Activated T-helper 1 cell treated with anti-CD3 and anti-CD28 coated beads, Interleukin-12 subunit alpha, Interleukin-12 subunit beta, Interleukin-2, Interleukin-4 antibody, amounts not matched to agents 30 ng/mL and 10 ng/mL and 1 ng/mL, durations not matched to agents 14 hours and 24 hours and 36 hours (primary cell): ENCODE measurements at regions of chr18 and their contacts with region 1.

Region 1: GRCh38 chr18:63518178-63519012 is 23.8 kb upstream of the SERPINB12 start:
- DNase-seq: peak; percentile 46
- H3K4me3 Mint-ChIP-seq: no peak overlapping the region
- H3K27ac Mint-ChIP-seq: no peak overlapping the region
- H3K4me1 Mint-ChIP-seq: no peaks in the 10 kb centered on the region
- H3K27me3 Mint-ChIP-seq: peaks cover 14% of the 10 kb centered on the region

Region 2: GRCh38 chr18:63578357-63578958 is 60.1 kb after region 1 on chr18:
- intact Hi-C with region 1: loop called (anchors 1 kb)
- DNase-seq: no peak
- H3K4me3 Mint-ChIP-seq: no peak overlapping the region
- H3K27ac Mint-ChIP-seq: no peak overlapping the region
- H3K4me1 Mint-ChIP-seq: no peaks in the 10 kb centered on the region
- H3K27me3 Mint-ChIP-seq: peaks cover 18% of the 10 kb centered on the region

Region 3: DNA sequence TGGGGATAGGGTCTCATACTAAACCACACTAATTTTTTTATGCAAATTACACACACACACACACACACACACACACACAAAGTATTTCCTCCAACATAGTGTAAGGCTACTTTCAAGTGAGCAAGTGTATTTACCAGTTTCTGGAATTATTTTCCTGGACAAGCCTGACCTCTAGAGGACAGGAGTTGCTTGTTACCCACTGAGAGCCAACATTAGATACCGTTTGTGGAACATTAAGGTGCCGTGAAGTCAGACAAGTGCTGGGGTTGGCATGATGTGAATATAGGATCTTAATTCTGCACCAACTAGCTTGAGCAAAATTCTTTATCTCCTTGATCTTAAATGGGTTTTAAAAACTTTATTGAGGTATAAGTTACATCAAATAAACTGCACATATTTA is 329.8 kb after region 1 on chr18:
- intact Hi-C with region 1: loop called (anchors 1 kb)
- DNase-seq: no peak
- H3K4me3 Mint-ChIP-seq: no peak overlapping the region
- H3K27ac Mint-ChIP-seq: no peak overlapping the region
- H3K4me1 Mint-ChIP-seq: no peaks in the 10 kb centered on the region
- H3K27me3 Mint-ChIP-seq: peaks cover 12% of the 10 kb centered on the region

Region 4: DNA sequence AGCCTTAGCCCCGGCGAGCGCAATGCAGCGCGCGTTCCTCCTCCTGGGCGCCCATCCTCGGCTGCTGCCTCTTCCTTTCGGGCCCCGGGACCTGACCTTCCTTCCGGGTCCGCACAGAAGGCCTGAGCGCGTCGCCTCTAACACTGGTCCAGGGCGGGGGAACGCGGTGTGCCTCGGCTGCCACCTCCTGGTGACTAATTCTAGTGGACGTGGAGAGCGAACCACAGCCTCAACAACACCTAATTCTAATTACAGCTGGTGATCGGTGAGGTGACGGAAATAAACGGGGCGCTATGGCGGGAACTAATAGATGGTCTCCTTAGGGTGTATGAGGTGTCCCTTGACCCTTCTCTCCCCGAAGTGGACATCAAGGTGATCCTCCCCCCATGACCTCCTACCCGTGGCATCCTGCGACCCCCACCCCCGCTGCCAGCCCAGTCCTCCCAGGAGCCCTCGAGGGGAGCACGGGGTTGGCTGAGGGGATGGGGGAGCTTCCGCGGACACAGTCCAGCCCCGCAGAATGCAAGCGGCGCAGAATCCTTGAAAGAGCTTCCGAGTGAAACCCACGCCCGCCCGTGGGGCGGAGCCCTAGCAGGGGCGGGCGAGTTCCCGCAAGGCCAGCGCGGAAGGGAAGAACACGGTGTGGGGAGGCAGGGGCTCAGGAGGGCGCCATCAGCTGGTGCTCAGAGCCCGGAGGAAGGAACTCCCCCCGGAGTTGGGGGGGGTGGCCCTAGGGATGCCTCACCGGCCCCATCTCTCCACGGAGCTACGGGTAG is 417.9 kb after region 1 on chr18:
- intact Hi-C with region 1: loop called (anchors 1 kb)
- DNase-seq: peak; percentile 55
- H3K4me3 Mint-ChIP-seq: peak overlapping the region; percentile 81
- H3K27ac Mint-ChIP-seq: peak overlapping the region; percentile 44
- H3K4me1 Mint-ChIP-seq: peaks cover 4% of the 10 kb centered on the region
- H3K27me3 Mint-ChIP-seq: peaks cover 25% of the 10 kb centered on the region

Region 5: DNA sequence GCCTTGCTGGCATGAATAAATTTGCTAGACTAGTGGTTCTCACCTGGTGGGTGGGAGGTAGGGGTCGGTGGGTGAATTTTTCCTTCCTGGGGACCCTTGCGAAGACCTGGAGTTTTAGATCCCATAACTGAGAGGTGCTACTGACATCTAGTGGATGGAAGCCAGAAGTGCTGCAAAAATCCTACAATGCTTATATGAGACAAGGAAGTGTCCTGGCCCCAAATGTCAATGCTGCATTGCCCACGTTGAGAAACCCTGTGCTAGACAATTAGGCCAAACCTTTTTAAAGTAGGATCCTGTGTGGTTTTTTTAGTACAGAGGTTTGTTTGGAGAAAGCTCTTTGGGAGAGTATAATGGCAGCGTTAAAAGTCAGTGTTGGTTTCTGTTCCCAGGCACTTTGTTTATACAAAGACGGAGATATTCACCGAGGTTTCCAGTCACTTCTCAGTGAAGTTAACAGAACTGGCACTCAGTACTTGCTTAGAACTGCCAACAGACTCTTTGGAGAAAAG is 461.1 kb after region 1 on chr18:
- intact Hi-C with region 1: loop called (anchors 1 kb)
- DNase-seq: peak; percentile 19
- H3K4me3 Mint-ChIP-seq: no peak overlapping the region
- H3K27ac Mint-ChIP-seq: peak overlapping the region; percentile 20
- H3K4me1 Mint-ChIP-seq: peaks cover 40% of the 10 kb centered on the region
- H3K27me3 Mint-ChIP-seq: no peaks in the 10 kb centered on the region

Region 6: DNA sequence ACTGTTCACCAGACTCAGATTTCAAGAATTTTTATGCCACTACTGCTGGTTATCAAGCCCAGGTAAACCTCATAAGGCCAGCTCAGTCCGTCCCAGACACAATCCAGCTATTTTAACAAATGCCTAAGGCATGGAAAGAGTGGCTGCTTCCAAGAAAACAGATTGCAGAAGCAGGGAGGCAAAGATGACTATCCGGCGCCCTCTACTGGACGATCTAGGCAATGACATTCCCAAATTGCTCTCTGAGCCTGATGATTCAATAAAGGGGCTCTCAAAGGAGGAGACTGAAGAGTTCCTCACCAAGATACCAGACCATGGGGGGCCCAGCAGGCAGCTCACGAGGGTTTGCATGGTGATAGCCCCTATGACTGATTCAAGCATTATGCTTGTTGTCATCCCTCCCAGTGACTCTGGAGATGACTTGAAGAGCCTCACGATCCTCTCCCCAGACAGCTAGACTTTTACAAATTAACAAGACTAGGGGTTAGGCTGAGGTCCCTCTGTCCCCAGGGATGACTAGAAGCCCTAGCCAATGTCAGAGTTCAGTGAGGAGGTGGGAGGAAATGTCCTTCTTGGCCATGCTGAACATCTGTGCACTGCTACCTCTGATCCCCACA is 476.5 kb after region 1 on chr18:
- intact Hi-C with region 1: loop called (anchors 2 kb)
- DNase-seq: peak; percentile 12
- H3K4me3 Mint-ChIP-seq: no peak overlapping the region
- H3K27ac Mint-ChIP-seq: no peak overlapping the region
- H3K4me1 Mint-ChIP-seq: no peaks in the 10 kb centered on the region
- H3K27me3 Mint-ChIP-seq: no peaks in the 10 kb centered on the region